Activated T-helper 1 cell treated with anti-CD3 and anti-CD28 coated beads, Interleukin-12 subunit alpha, Interleukin-12 subunit beta, Interleukin-2, Interleukin-4 antibody, amounts not matched to agents 30 ng/mL and 10 ng/mL and 1 ng/mL, durations not matched to agents 14 hours and 24 hours and 36 hours (primary cell): ENCODE measurements at regions of chr2 and their contacts with region 1.

Region 1: DNA sequence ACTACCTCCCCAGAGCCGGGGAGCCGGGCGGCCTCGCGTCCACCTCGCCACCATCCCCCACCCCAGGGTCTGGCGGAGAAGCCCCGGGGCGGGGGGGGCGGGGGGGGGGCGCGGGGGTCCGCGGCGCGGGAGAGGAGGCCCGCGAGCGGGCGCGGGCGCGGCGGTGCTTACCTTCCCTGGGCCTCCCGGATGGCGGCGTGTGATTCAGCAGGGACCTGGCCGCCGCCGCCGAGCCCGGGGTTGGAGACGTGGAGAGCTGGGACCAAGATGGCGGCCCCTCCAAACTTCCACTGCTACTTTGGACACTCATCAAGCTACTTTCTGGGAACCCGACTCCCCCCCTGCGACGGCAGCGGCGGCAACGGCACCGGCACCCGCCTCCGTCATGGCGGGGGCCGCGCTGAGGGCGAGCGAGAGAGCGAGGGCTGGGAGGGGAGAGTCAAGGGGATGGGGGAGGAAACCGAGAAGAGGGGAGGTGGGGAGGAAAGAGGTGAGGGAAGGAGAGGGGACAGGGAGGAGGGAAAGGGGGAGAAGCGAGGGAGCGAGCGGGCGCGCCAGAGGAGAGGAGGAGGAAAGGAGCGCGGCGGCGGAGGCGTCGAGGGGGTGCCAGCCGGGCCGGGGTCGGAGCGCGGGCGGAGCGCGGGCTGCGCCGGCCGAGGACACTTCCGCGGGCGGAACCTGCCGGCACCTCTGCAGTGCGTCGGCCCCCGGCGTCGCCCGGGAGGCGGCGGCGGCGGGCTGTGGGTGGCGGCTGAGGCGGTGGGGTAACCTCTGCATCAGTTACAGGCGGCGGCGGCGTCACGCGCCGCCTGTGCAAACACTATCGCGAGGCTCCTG is at the start of gene TLK1:
- DNase-seq: peak; percentile 64
- H3K4me3 Mint-ChIP-seq: peak within 1 kb of the TSS; percentile 96
- H3K27ac Mint-ChIP-seq: peak within 1 kb of the TSS; percentile 98
- H3K4me1 Mint-ChIP-seq: peaks cover 71% of the 10 kb centered on the region
- H3K27me3 Mint-ChIP-seq: peaks cover 2% of the 10 kb centered on the region
- total RNA-seq, gene TLK1: 106 and 112 TPM in 2 replicates

Region 2: DNA sequence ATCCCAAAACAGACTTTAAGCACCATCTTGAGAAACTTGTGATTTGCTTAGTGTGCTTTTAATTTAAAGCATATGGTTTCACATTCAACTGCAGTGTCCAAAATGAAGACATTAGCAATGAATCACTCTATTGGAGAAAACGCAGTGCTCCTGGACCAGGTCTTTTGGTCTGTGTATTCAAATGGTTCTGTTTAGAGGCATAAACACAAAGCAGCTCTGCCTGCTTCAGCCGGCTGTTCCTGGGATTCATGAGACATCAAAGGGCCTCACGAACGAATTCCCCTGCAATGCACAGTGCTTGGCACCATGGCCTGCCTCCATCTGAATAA is 562.3 kb before region 1 on chr2:
- intact Hi-C with region 1: no loop called
- DNase-seq: no peak
- H3K4me3 Mint-ChIP-seq: no peak overlapping the region
- H3K27ac Mint-ChIP-seq: no peak overlapping the region
- H3K4me1 Mint-ChIP-seq: no peaks in the 10 kb centered on the region
- H3K27me3 Mint-ChIP-seq: peaks cover 4% of the 10 kb centered on the region

Region 3: GRCh38 chr2:170973492-170974303 is 186.6 kb before region 1 on chr2:
- intact Hi-C with region 1: loop called (anchors 1 kb)
- DNase-seq: peak; percentile 77
- H3K4me3 Mint-ChIP-seq: peak overlapping the region; percentile 73
- H3K27ac Mint-ChIP-seq: no peak overlapping the region
- H3K4me1 Mint-ChIP-seq: peaks cover 16% of the 10 kb centered on the region
- H3K27me3 Mint-ChIP-seq: no peaks in the 10 kb centered on the region

Region 4: GRCh38 chr2:171095014-171095582 is 65.2 kb before region 1 on chr2:
- intact Hi-C with region 1: loop called (anchors 2 kb)
- DNase-seq: no peak
- H3K4me3 Mint-ChIP-seq: no peak overlapping the region
- H3K27ac Mint-ChIP-seq: peak overlapping the region; percentile 72
- H3K4me1 Mint-ChIP-seq: peaks cover 32% of the 10 kb centered on the region
- H3K27me3 Mint-ChIP-seq: no peaks in the 10 kb centered on the region

Region 5: GRCh38 chr2:171200469-171200868 is 40.1 kb after region 1 on chr2:
- intact Hi-C with region 1: no loop called
- DNase-seq: no peak
- H3K4me3 Mint-ChIP-seq: no peak overlapping the region
- H3K27ac Mint-ChIP-seq: no peak overlapping the region
- H3K4me1 Mint-ChIP-seq: no peaks in the 10 kb centered on the region
- H3K27me3 Mint-ChIP-seq: no peaks in the 10 kb centered on the region

Region 6: GRCh38 chr2:171210864-171211431 is 50.6 kb after region 1 on chr2:
- intact Hi-C with region 1: loop called (anchors 2 kb)
- DNase-seq: peak; percentile 31
- H3K4me3 Mint-ChIP-seq: peak overlapping the region; percentile 48
- H3K27ac Mint-ChIP-seq: peak overlapping the region; percentile 35
- H3K4me1 Mint-ChIP-seq: peaks cover 11% of the 10 kb centered on the region
- H3K27me3 Mint-ChIP-seq: peaks cover 2% of the 10 kb centered on the region

Region 7: GRCh38 chr2:171260471-171261424 is 100.4 kb after region 1 on chr2:
- intact Hi-C with region 1: loop called (anchors 1 kb)
- DNase-seq: no peak
- H3K4me3 Mint-ChIP-seq: no peak overlapping the region
- H3K27ac Mint-ChIP-seq: peak overlapping the region; percentile 83
- H3K4me1 Mint-ChIP-seq: peaks cover 31% of the 10 kb centered on the region
- H3K27me3 Mint-ChIP-seq: no peaks in the 10 kb centered on the region

Region 8: GRCh38 chr2:171522052-171522787 is 361.9 kb after region 1 on chr2 and contains the start of gene CYBRD1:
- intact Hi-C with region 1: loop called (anchors 5 kb)
- DNase-seq: peak; percentile 3
- H3K4me3 Mint-ChIP-seq: peak within 1 kb of the TSS; percentile 86
- H3K27ac Mint-ChIP-seq: peak within 1 kb of the TSS; percentile 50
- H3K4me1 Mint-ChIP-seq: peaks cover 6% of the 10 kb centered on the region
- H3K27me3 Mint-ChIP-seq: peaks cover 44% of the 10 kb centered on the region
- total RNA-seq, gene CYBRD1: 4.1 and 4.2 TPM in 2 replicates